Activated B cell treated with CpG ODN at 0.5 μM for 24 hours (primary cell): ENCODE measurements at regions of chr11 and their contacts with region 1.

Region 1: DNA sequence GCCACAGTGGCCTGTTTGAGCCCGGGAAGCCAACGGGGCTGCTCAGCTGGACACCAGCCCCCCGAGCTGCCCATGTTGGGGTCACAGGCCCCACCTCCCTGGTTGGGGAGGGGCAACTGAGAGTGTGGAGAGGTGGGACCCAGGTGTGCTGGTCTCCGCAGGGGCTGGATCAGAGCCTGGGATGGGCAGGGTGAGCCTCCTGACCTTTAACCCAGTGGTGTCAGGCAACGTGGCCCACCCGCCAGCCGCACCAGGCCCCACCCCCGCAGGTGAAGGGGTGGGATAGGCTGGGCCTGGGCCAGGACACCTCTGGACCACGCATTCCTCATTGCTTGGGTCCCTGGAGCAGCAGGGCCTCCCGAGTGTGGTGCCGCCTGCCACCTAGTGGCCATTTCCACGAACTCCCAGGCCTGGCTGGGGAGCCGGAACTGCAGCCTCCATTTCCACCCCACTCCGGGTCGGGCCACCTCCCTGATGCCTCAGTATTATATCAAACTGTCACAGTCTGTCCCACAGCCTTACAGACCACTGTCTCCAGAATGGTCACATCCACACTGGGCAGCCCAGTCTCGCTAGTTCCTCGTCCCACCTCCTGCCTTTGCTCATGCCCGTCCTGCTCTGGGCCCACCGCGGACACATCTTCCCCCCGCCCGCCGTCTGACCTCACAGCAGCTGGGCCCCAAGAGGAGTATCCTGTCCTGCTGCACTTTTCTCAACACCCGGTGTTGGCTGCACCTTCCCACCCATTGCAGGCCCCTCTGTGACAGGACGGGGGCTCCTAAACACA is 13.3 kb upstream of the PPP6R3 start:
- DNase-seq: peak; percentile 74
- ATAC-seq: peak; percentile 99
- H3K4me3 Mint-ChIP-seq: no peak overlapping the region
- H3K27ac Mint-ChIP-seq: no peak overlapping the region
- H3K4me1 Mint-ChIP-seq: peaks cover 13% of the 10 kb centered on the region
- H3K27me3 Mint-ChIP-seq: no peaks in the 10 kb centered on the region
- CTCF ChIP-seq: peak; percentile 97

Region 2: DNA sequence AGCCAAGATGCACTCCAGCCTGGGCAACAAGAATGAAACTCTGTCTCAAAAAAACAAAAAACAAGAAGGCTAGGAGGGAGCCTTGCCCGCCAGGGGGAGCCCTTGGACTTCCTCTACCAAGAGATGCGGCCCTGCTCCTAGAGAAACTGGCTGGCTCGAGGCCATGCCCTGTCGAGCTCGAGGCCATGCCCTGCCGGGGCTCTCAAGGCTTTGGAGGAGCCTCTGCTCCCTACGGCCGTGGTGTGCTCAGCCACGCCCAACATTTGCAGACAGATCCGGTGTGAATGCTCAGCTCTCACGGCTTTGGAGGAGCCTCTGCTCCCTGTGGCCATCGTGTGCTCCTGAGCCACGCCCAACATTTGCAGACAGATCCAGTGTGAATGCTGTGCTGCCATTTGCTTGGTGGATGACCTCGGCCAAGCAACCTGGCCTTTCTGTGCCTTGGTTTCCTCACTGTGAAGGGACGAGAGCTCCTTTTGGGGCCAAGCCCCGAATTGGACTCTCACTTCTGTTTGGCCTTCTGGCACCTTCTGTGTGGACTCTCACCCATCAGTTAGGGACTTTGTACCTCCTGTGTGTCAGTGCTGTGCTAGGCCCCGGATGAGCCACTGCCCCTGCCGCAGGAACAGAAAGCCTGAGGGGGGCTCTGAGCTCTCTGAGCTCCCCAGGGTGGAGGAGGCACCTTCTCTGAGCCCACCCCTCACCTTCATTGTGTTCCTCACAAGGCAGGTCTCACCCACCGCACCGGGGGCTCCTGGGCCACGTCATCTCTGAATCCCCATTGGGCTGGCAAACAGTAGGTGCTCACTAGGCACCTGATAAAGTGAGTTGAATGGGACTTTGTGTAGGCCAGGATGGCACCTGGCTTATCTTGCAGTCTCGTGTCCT is 189.5 kb before region 1 on chr11:
- CTCF ChIA-PET with region 1: interaction called, 7 read pairs
- POLR2A ChIA-PET with region 1: no interaction called
- intact Hi-C with region 1: loop called (anchors 1 kb)
- DNase-seq: peak; percentile 90
- ATAC-seq: peak; percentile 94
- H3K4me3 Mint-ChIP-seq: peak overlapping the region; percentile 52
- H3K27ac Mint-ChIP-seq: peak overlapping the region; percentile 80
- H3K4me1 Mint-ChIP-seq: peaks cover 20% of the 10 kb centered on the region
- H3K27me3 Mint-ChIP-seq: no peaks in the 10 kb centered on the region
- CTCF ChIP-seq: no peak

Region 3: GRCh38 chr11:68312117-68312779 is 135.0 kb before region 1 on chr11 and contains the start of gene LRP5:
- CTCF ChIA-PET with region 1: no interaction called
- POLR2A ChIA-PET with region 1: no interaction called
- intact Hi-C with region 1: loop called (anchors 5 kb)
- DNase-seq: peak; percentile 28
- ATAC-seq: peak; percentile 64
- H3K4me3 Mint-ChIP-seq: peak within 1 kb of the TSS; percentile 83
- H3K27ac Mint-ChIP-seq: no peak within 1 kb of the TSS
- H3K4me1 Mint-ChIP-seq: peaks cover 13% of the 10 kb centered on the region
- H3K27me3 Mint-ChIP-seq: peaks cover 23% of the 10 kb centered on the region
- CTCF ChIP-seq: no peak
- total RNA-seq, gene LRP5: 7.7 and 8.7 TPM in 2 replicates